ENCODE measurements at regions of chr4 and their contacts with region 1.

Region 1: GRCh38 chr4:166165829-166166420 is 292.9 kb downstream of the TLL1 start:
- DNase-seq: no peak
- ATAC-seq: peak; percentile 37 to 78 (median 66)
- H3K4me3 ChIP-seq: no peak overlapping the region
- H3K27ac ChIP-seq: no peak overlapping the region
- H3K4me1 ChIP-seq: no peaks in the 10 kb centered on the region
- H3K27me3 ChIP-seq: peaks cover 0 to 3% (median 0%) of the 10 kb centered on the region in 9 donors
- CTCF ChIP-seq: peak; percentile 60 to 79 (median 72)
- POLR2A ChIP-seq: no peak

Region 2: GRCh38 chr4:166252487-166253402 is 86.8 kb after region 1 on chr4:
- intact Hi-C with region 1: loop called in 5 of 10 experiments (anchors 2 to 10 kb)
- DNase-seq: no peak
- ATAC-seq: no peak
- H3K4me3 ChIP-seq: no peak overlapping the region
- H3K27ac ChIP-seq: no peak overlapping the region
- H3K4me1 ChIP-seq: no peaks in the 10 kb centered on the region
- H3K27me3 ChIP-seq: no peaks in the 10 kb centered on the region
- CTCF ChIP-seq: peak in 11 of 12 donors; percentile 20 to 54 (median 29)
- POLR2A ChIP-seq: no peak

Region 3: DNA sequence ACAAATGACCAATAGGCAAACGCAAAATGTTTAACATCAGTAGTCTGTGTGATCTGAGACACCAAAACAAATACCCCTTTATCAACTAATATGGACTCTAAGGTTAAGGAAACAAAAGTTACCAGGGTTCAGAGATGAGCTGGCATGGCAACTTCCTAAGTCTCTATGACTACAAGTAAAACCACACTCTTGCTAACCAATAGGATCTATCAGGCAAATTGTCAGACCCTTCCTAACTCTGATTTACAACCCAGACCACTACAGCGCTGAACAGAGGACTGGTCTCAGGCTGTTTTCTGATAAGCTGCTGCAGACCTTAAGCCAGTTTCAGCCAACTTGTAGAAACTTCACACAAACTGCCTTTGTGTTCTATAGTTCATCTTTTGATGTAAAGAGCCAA is 315.1 kb after region 1 on chr4:
- intact Hi-C with region 1: no loop called
- DNase-seq: no peak
- ATAC-seq: no peak
- H3K4me3 ChIP-seq: no peak overlapping the region
- H3K27ac ChIP-seq: no peak overlapping the region
- H3K4me1 ChIP-seq: no peaks in the 10 kb centered on the region
- H3K27me3 ChIP-seq: no peaks in the 10 kb centered on the region
- CTCF ChIP-seq: no peak
- POLR2A ChIP-seq: no peak

Region 4: DNA sequence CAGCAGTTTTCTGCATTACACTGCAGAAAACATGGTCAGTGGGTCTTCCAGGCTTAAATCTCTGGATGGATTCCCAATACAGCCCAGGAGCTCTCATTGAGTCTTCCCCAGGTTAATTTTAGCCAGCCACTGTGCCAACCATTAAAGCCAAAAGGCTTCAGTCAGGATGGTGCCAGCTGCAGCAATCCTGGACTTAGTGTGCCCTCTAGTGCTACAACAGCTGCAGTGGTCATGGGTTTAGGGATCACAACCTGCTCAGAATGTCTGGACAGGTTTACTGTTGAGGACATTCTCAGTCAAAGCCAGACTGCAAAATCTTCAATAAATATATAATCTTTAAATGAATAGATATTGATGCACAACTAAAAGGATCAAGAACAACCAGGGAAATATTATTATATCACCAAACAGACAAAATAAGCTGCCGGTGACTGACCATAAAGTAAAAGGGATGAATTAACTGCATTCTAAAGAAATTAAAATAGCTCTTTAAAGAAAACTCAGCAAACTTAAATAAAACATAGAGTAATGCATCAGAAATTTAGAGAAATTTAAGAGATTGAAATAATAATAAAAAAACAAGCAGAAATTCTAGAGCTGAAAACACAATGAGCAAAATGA is 428.5 kb after region 1 on chr4:
- intact Hi-C with region 1: loop called in 4 of 10 experiments (anchors 5 to 10 kb)
- DNase-seq: peak in 2 of 5 donors; percentile 21 to 25
- ATAC-seq: peak in 3 of 4 donors; percentile 78 to 97 (median 91)
- H3K4me3 ChIP-seq: no peak overlapping the region
- H3K27ac ChIP-seq: no peak overlapping the region
- H3K4me1 ChIP-seq: no peaks in the 10 kb centered on the region
- H3K27me3 ChIP-seq: no peaks in the 10 kb centered on the region
- CTCF ChIP-seq: peak in 7 of 12 donors; percentile 19 to 56 (median 28)
- POLR2A ChIP-seq: no peak

Region 5: DNA sequence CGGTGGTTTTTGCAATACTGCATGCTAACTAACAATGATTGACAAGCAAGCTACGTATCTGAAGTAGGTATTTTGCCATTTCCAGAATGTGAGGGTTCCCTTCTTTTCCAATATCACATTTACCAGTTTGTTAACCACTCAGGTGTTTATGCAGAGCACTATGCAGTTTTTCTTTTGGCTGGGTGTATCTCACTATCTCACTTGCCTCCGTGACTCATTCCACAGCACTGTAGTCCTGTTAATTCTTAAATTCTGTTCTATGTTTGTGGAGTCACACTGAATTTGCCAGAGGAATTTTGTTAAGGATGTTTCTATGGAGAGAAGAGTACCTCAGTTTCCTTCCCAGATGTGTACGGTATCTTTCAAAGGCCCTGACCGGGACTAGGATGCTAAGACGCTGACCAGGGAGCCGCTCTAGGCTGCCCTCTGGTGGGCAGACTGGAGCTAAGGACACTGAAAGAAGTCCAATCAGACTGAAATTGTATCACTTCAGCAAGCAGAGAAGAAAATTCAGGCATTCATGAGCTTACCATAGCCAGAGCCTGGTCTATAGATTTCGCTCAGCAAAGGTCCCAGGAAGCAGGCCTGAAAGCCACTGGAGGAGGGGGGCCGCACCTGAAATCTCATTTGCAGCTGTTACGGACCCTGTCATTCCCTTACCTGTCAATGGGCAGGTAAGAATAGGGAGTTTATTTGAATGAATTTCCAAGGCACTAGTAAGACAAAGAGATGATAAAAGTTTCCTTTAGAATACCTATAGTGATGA is 1456.7 kb after region 1 on chr4:
- intact Hi-C with region 1: loop called in 2 of 10 experiments (anchors 5 kb)
- DNase-seq: peak in 1 of 5 donors; percentile 27
- ATAC-seq: peak in 1 of 4 donors; percentile 64
- H3K4me3 ChIP-seq: no peak overlapping the region
- H3K27ac ChIP-seq: no peak overlapping the region
- H3K4me1 ChIP-seq: no peaks in the 10 kb centered on the region
- H3K27me3 ChIP-seq: no peaks in the 10 kb centered on the region
- CTCF ChIP-seq: peak; percentile 27 to 69 (median 53)
- POLR2A ChIP-seq: no peak

Region 6: GRCh38 chr4:168076989-168077725 is 1911.2 kb after region 1 on chr4:
- intact Hi-C with region 1: loop called in 4 of 10 experiments (anchors 5 to 10 kb)
- DNase-seq: peak in 3 of 5 donors; percentile 18 to 27 (median 20)
- ATAC-seq: peak in 1 of 4 donors; percentile 59
- H3K4me3 ChIP-seq: no peak overlapping the region
- H3K27ac ChIP-seq: no peak overlapping the region
- H3K4me1 ChIP-seq: no peaks in the 10 kb centered on the region
- H3K27me3 ChIP-seq: no peaks in the 10 kb centered on the region
- CTCF ChIP-seq: peak; percentile 56 to 81 (median 70)
- POLR2A ChIP-seq: no peak

Region 7: GRCh38 chr4:168153596-168154440 is 1987.9 kb after region 1 on chr4:
- intact Hi-C with region 1: loop called in 3 of 10 experiments (anchors 5 to 10 kb)
- DNase-seq: peak; percentile 48 to 88 (median 60)
- ATAC-seq: peak; percentile 37 to 74 (median 66)
- H3K4me3 ChIP-seq: peak overlapping the region in 9 of 12 donors; percentile 0 to 42 (median 25)
- H3K27ac ChIP-seq: no peak overlapping the region
- H3K4me1 ChIP-seq: peaks cover 0 to 3% (median 0%) of the 10 kb centered on the region in 12 donors
- H3K27me3 ChIP-seq: no peaks in the 10 kb centered on the region
- CTCF ChIP-seq: peak; percentile 30 to 70 (median 52)
- POLR2A ChIP-seq: no peak

Measured in heart left ventricle (tissue), 16 donors.